ENCODE measurements at regions of chr4 and their contacts with region 1.

Region 1: GRCh38 chr4:166091912-166092510 is 219.0 kb downstream of the TLL1 start:
- DNase-seq: no peak

Region 2: GRCh38 chr4:165540206-165540830 is 551.7 kb before region 1 on chr4:
- intact Hi-C with region 1: loop called (anchors 1 kb)
- DNase-seq: no peak

Measured in posterior cingulate gyrus (tissue), 11 donors.